OCI-LY7 (cell line): ENCODE measurements at regions of chr6 and their contacts with region 1.

Region 1: DNA sequence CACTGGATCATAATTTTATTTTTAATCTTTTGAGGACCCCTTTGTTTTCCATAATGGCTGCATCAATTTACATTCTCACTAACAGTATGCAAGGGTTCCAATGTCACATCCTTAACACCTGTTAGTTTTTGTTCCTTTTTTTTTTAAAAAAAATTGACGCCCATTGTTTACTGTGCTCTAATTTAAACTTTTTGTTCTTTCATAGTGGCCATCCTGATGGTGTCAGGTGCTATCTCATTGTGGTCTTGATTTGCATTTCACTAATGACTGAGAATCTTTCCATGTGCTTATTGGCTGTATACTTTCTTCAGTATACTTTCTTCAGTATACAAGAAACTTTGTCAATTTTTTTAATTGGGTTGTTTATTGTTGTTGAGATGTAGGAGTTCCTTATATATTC is 347.0 kb downstream of the RNGTT start:
- DNase-seq: peak; percentile 97
- H3K4me3 ChIP-seq: peak overlapping the region; percentile 63
- H3K27ac ChIP-seq: peak overlapping the region; percentile 95
- H3K4me1 ChIP-seq: peaks cover 88% of the 10 kb centered on the region
- CTCF ChIP-seq: no peak; the same call in 1 of the 2 replicates

Region 2: GRCh38 chr6:87832025-87832825 is 784.2 kb before region 1 on chr6:
- CTCF ChIA-PET with region 1: no interaction called
- POLR2A ChIA-PET with region 1: no interaction called
- intact Hi-C with region 1: loop called (anchors 5 kb)
- DNase-seq: peak; percentile 84
- H3K4me3 ChIP-seq: peak overlapping the region; percentile 42
- H3K27ac ChIP-seq: peak overlapping the region; percentile 81
- H3K4me1 ChIP-seq: peaks cover 68% of the 10 kb centered on the region
- CTCF ChIP-seq: peak; percentile 98

Region 3: GRCh38 chr6:87914637-87915395 is 701.6 kb before region 1 on chr6:
- CTCF ChIA-PET with region 1: no interaction called
- POLR2A ChIA-PET with region 1: interaction called, 52 read pairs
- intact Hi-C with region 1: no loop called
- DNase-seq: peak; percentile 58
- H3K4me3 ChIP-seq: no peak overlapping the region
- H3K27ac ChIP-seq: peak overlapping the region; percentile 99
- H3K4me1 ChIP-seq: peaks cover 95% of the 10 kb centered on the region
- CTCF ChIP-seq: no peak

Region 4: GRCh38 chr6:88177961-88178464 is 438.4 kb before region 1 on chr6:
- CTCF ChIA-PET with region 1: no interaction called
- POLR2A ChIA-PET with region 1: interaction called, 6 read pairs
- intact Hi-C with region 1: loop called (anchors 1 kb)
- DNase-seq: peak; percentile 91
- H3K4me3 ChIP-seq: peak overlapping the region; percentile 74
- H3K27ac ChIP-seq: peak overlapping the region; percentile 93
- H3K4me1 ChIP-seq: peaks cover 68% of the 10 kb centered on the region
- CTCF ChIP-seq: no peak

Region 5: DNA sequence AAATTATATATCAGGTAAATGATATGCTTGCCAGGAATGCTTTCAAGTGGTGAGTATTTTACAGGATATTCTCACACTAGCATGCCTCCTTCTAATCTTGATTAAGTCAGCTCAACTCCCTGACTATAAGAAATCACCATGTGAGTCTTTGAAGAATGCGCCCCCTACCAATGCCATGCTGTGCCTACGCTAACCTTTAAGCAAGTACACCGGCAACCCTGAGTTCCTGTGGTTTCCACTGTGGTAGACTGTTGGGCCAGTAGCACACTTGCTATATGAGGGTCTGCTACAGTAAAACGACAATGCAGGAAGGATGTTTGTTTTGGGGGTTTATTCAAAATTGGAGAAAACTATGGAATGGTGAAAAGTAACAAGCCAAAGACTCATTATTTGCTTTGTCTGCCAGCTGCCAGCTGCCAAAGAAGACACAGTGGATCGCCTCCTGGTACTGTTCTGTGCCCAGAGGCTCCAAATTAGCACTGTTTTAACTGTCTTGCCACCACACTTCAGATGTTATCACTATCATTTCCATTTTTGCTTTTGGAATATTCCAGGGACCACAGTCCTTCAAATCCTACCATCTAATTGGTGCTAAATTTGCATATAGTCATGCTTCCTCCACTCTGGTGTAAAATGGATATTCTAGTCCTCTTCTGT is 13.6 kb after region 1 on chr6:
- CTCF ChIA-PET with region 1: interaction called, 4 read pairs
- POLR2A ChIA-PET with region 1: interaction called, 55 read pairs
- intact Hi-C with region 1: no loop called
- DNase-seq: peak; percentile 90
- H3K4me3 ChIP-seq: peak overlapping the region; percentile 45
- H3K27ac ChIP-seq: peak overlapping the region; percentile 62
- H3K4me1 ChIP-seq: peaks cover 75% of the 10 kb centered on the region
- CTCF ChIP-seq: peak; percentile 89

Region 6: GRCh38 chr6:88665131-88665530 is 48.8 kb after region 1 on chr6:
- CTCF ChIA-PET with region 1: no interaction called
- POLR2A ChIA-PET with region 1: no interaction called
- intact Hi-C with region 1: no loop called
- DNase-seq: no peak
- H3K4me3 ChIP-seq: no peak overlapping the region
- H3K27ac ChIP-seq: no peak overlapping the region
- H3K4me1 ChIP-seq: no peaks in the 10 kb centered on the region
- CTCF ChIP-seq: no peak

Region 7: DNA sequence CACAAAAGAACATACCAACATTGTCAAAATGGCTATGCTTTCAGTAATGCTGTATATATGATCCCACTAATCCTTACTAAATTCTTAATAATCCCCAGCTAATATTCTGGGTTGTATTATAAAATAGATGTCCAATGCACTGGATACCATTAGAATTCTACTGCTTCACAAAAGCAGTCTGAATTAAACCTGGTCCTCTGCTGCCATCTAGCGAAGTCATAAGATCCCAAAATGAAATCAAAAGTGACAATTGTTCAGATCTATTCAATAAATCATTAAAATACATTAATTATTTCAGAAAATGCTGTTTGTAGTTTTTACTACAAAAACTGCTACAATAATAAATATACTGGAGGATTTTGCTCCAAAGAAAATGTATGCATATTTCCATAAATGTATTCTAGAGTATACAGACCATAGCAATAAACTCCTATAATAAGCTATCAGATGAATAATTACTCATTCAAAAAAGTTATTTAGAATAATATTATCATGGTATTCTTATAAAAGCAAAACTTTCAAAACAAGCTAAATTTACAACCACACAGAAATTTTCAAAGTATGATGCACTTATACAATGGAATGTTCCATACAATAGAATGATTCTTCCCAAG is 254.4 kb after region 1 on chr6:
- CTCF ChIA-PET with region 1: no interaction called
- POLR2A ChIA-PET with region 1: no interaction called
- intact Hi-C with region 1: loop called (anchors 5 kb)
- DNase-seq: peak; percentile 79
- H3K4me3 ChIP-seq: no peak overlapping the region
- H3K27ac ChIP-seq: no peak overlapping the region
- H3K4me1 ChIP-seq: peaks cover 16% of the 10 kb centered on the region
- CTCF ChIP-seq: peak; percentile 96

Region 8: DNA sequence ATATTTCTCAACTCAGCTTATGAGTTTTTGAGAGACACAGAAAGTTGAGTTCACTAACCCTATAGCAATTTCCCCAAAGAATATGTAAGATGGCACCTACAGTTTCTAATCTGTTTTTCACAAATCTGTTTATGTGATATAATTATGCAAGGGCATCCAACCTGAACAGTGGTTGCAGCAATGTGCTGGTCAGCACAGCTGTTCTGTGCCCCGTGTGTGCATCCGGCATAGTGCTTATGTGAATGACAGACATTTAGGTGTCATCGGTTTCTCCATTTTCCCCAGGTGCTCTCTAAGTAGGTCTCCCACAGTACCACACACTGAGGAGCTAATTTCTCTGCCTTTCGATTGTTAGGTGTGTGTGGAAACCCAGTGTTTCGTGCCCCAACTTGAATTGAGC is 1687.9 kb after region 1 on chr6:
- CTCF ChIA-PET with region 1: no interaction called
- POLR2A ChIA-PET with region 1: no interaction called
- intact Hi-C with region 1: loop called (anchors 5 kb)
- DNase-seq: peak; percentile 96
- H3K4me3 ChIP-seq: peak overlapping the region; percentile 46
- H3K27ac ChIP-seq: peak overlapping the region; percentile 87
- H3K4me1 ChIP-seq: peaks cover 84% of the 10 kb centered on the region
- CTCF ChIP-seq: no peak